Activated CD4-positive, alpha-beta T cell treated with anti-CD3 and anti-CD28 coated beads, Interleukin-2, amount 10 ng/mL, durations not matched to agents 24 days and 14 days (primary cell): ENCODE measurements at regions of chr6 and their contacts with region 1.

Region 1: DNA sequence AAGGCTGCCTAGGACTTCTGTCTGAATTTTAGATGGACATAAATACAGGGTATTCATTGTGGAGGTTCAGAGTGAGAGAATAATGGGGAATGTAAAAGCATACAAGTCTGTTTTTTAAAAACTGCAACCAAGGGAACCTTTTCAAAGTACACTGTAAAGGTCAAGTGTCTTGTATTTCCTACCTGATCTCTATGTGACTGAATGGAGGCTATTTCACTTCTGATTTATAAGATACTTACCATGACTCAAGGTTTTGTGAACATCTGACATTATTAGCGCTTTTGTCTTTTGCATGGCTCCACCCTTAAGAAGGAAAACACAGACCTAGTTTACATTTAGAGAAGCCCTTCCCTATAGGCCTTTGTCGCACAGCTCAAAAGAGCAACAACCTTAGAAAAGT is 126.5 kb downstream of the ZFAND3 start:
- DNase-seq: no peak
- H3K4me3 Mint-ChIP-seq: no peak overlapping the region
- H3K27ac Mint-ChIP-seq: no peak overlapping the region
- H3K4me1 Mint-ChIP-seq: peaks cover 10% of the 10 kb centered on the region
- H3K27me3 Mint-ChIP-seq: no peaks in the 10 kb centered on the region

Region 2: GRCh38 chr6:37878150-37878713 is 67.8 kb before region 1 on chr6:
- intact Hi-C with region 1: no loop called
- DNase-seq: no peak
- H3K4me3 Mint-ChIP-seq: no peak overlapping the region
- H3K27ac Mint-ChIP-seq: no peak overlapping the region
- H3K4me1 Mint-ChIP-seq: peaks cover 21% of the 10 kb centered on the region
- H3K27me3 Mint-ChIP-seq: no peaks in the 10 kb centered on the region

Region 3: DNA sequence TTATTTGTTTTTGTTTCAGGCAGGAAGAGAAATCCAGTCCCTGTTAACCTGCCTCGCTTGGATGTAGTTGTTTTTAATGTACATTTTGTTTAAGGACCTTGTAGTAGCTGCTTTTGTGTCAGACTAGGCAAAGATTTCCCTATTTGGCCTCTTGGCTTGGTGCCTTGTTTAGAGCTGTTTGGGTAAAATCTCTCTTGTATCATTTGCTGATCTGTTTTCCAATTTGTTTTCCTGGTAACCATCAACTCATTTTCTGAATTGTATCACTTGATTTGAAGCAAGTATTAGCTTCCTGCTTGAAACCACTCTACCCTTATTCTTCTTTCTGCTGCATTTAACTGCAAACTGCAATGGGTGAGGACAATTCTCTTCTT is 34.2 kb after region 1 on chr6:
- intact Hi-C with region 1: loop called (anchors 5 kb)
- DNase-seq: no peak
- H3K4me3 Mint-ChIP-seq: no peak overlapping the region
- H3K27ac Mint-ChIP-seq: no peak overlapping the region
- H3K4me1 Mint-ChIP-seq: peaks cover 17% of the 10 kb centered on the region
- H3K27me3 Mint-ChIP-seq: no peaks in the 10 kb centered on the region